Transverse colon (tissue), 4 donors: ENCODE measurements at regions of chr18 and their contacts with region 1.

Region 1: DNA sequence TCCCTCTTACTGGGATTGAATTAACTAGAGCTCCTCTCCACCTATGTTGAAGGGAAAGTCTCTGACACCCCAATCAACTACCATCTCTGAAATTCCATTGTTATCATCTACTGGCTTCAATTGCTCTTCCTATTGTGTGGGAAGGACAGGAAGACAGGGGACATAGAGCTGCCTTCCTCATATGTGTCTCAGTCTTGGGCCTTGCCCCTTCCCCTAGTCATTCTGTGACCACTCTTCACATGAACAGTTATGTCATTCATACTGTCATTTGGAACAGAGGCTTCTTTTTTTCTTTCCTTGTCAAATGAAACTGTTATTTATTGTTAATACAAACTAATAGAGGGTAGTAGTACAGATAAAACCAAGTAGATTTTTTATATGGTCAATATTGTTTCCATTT is 69.6 kb upstream of the EMILIN2 start:
- DNase-seq: no peak
- H3K4me3 ChIP-seq: no peak overlapping the region
- H3K27ac ChIP-seq: no peak overlapping the region
- H3K4me1 ChIP-seq: no peaks in the 10 kb centered on the region
- H3K27me3 ChIP-seq: no peaks in the 10 kb centered on the region
- CTCF ChIP-seq: no peak
- EP300 ChIP-seq: no peak
- POLR2A ChIP-seq: no peak

Region 2: DNA sequence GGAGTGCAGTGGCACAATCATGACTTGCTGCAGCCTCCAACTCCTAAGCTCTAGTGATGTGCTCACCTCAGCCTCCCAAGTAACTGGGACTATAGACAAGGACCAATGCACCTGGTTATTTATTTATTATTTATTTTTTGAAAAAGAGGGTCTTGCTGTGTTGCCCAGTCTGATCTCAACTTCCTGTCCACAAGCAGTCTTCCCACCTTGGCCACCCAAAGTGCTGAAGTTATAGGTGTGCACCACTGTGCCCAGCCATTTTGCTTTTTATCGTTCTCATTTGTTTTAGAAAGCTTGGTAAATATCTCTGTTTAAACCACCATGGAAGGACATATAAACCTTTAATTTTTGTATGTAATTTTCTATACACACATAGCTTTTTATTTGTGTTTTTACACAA is 47.5 kb before region 1 on chr18:
- in situ Hi-C with region 1: no loop called
- intact Hi-C with region 1: loop called (anchors 1 kb)
- DNase-seq: no peak
- H3K4me3 ChIP-seq: no peak overlapping the region
- H3K27ac ChIP-seq: no peak overlapping the region
- H3K4me1 ChIP-seq: no peaks in the 10 kb centered on the region
- H3K27me3 ChIP-seq: no peaks in the 10 kb centered on the region
- CTCF ChIP-seq: no peak
- EP300 ChIP-seq: no peak
- POLR2A ChIP-seq: no peak